ENCODE measurements at regions of chr20 and their contacts with region 1.

Region 1: GRCh38 chr20:13061381-13061780 is 52.6 kb downstream of the SPTLC3 start:
- DNase-seq: no peak
- H3K4me3 ChIP-seq: no peak overlapping the region
- H3K27ac ChIP-seq: no peak overlapping the region
- H3K4me1 ChIP-seq: no peaks in the 10 kb centered on the region
- H3K27me3 ChIP-seq: no peaks in the 10 kb centered on the region
- CTCF ChIP-seq: no peak
- EP300 ChIP-seq: no peak
- POLR2A ChIP-seq: no peak

Region 2: DNA sequence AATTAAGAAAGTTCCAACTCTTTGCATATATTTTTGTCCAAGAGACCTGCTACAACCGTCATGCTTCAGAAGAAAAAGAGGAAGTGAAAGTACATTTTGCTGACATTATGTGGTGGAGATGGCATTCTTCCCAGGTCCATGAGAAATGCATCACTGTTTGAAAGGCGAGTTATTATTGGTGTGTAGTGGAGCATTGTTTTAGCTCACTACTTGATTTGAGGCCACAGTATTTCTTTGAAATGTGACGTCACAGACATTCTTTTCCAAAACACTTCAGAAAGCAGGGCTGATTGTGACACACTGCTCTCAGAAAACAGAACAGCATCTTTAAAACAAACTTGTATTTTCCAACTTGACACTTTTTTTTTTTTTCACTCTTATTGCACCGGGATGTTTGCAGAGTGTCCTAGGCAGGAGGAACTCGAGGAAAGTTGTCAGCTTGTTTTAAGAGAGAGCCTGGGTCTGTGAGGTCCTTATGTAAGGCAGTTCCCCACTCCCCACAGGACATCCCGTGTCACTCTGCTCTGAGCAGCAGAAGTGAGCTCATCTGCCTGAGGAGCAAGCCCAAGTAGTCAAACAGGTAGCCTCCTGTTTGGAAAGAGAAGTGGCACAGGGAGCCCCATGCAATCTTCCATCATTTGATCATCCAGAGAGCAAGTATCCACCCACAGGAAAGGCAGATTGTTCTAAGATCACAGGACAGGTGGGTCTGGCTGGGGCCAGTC is 51.5 kb before region 1 on chr20:
- intact Hi-C with region 1: loop called (anchors 10 kb)
- DNase-seq: peak; percentile 65
- H3K4me3 ChIP-seq: peak overlapping the region; percentile 21 to 45 (median 42)
- H3K27ac ChIP-seq: peak overlapping the region; percentile 72 to 84 (median 78)
- H3K4me1 ChIP-seq: peaks cover 0 to 28% (median 10%) of the 10 kb centered on the region in 4 donors
- H3K27me3 ChIP-seq: no peaks in the 10 kb centered on the region
- CTCF ChIP-seq: no peak
- EP300 ChIP-seq: peak in 2 of 4 donors; percentile 3
- POLR2A ChIP-seq: no peak